ENCODE measurements at regions of chr13 and their contacts with region 1.

Region 1: GRCh38 chr13:29850224-29850898 is at the start of gene UBL3:
- DNase-seq: peak; percentile 89 to 97 (median 93)
- ATAC-seq: peak; percentile 87
- H3K4me3 ChIP-seq: peak within 1 kb of the TSS; percentile 82
- H3K4me3 Mint-ChIP-seq: peak within 1 kb of the TSS; percentile 99
- H3K27ac ChIP-seq: peak within 1 kb of the TSS; percentile 92 to 93
- H3K27ac Mint-ChIP-seq: peak within 1 kb of the TSS; percentile 86
- H3K4me1 ChIP-seq: peaks cover 4% of the 10 kb centered on the region
- H3K4me1 Mint-ChIP-seq: peaks cover 20% of the 10 kb centered on the region
- H3K27me3 ChIP-seq: no peaks in the 10 kb centered on the region
- H3K27me3 Mint-ChIP-seq: no peaks in the 10 kb centered on the region
- CTCF ChIP-seq: no peak
- total RNA-seq, gene UBL3: 39.5 to 41.9 TPM

Region 2: GRCh38 chr13:29595380-29596063 is 254.8 kb before region 1 on chr13 and contains the start of gene SLC7A1:
- CTCF ChIA-PET with region 1: no interaction called
- POLR2A ChIA-PET with region 1: interaction called, 3 read pairs
- intact Hi-C with region 1: loop called in 1 of 2 experiments (anchors 5 kb)
- DNase-seq: peak; percentile 54 to 95 (median 74)
- ATAC-seq: peak; percentile 90
- H3K4me3 ChIP-seq: peak within 1 kb of the TSS; percentile 65
- H3K4me3 Mint-ChIP-seq: peak within 1 kb of the TSS; percentile 97
- H3K27ac ChIP-seq: peak within 1 kb of the TSS; percentile 31 to 52
- H3K27ac Mint-ChIP-seq: peak within 1 kb of the TSS; percentile 93
- H3K4me1 ChIP-seq: peaks cover 23% of the 10 kb centered on the region
- H3K4me1 Mint-ChIP-seq: peaks cover 45% of the 10 kb centered on the region
- H3K27me3 ChIP-seq: no peaks in the 10 kb centered on the region
- H3K27me3 Mint-ChIP-seq: no peaks in the 10 kb centered on the region
- CTCF ChIP-seq: no peak
- total RNA-seq, gene SLC7A1: 11.3 to 12.3 TPM

Region 3: DNA sequence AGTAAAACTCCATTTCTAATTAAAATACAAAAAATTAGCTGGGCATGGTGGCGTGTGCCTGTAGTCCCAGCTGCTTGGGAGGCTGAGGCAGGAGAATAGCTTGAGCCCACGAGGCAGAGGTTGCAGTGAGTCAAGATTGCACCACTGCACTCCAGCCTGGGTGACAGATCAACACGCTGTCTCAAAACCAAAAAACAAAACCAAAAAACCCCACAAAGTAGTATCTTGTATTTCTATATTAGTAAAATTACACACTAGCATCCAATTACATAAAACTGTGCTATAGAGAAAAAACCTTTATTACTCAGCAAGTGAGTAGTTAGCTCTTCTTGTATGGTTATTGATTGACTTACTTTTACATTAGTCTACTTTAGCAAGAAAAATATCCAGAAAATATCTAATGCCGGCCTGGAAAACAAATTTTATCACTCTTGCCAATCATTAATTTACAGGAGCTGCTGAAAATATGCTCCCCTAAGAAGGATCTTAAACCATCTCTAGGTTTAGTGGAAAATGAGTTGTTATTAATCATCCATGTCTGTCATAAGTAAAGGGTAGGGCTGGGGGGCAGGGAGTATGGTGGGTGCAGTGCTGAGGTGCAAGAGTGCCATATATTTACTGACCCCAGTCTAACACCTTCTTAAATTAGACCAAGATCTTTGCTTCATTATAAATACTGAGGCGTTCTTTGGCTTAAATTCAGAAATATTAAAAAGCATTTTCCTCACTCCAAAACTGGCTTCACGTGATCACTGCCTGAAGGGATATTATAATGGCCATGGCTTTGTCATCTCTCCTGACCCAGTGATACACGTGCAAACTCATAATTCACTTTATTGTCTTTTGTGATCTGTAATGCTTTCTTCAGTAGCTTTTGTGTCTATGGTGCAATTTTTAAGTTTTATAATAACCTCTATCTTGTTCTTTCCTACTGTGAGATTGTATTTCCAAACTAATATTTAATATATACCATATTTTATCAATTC is 44.1 kb before region 1 on chr13:
- CTCF ChIA-PET with region 1: no interaction called
- POLR2A ChIA-PET with region 1: no interaction called
- intact Hi-C with region 1: loop called in 1 of 2 experiments (anchors 5 kb)
- DNase-seq: no peak
- ATAC-seq: no peak
- H3K4me3 ChIP-seq: no peak overlapping the region
- H3K4me3 Mint-ChIP-seq: no peak overlapping the region
- H3K27ac ChIP-seq: no peak overlapping the region
- H3K27ac Mint-ChIP-seq: no peak overlapping the region
- H3K4me1 ChIP-seq: peaks cover 8% of the 10 kb centered on the region
- H3K4me1 Mint-ChIP-seq: peaks cover 51% of the 10 kb centered on the region
- H3K27me3 ChIP-seq: no peaks in the 10 kb centered on the region
- H3K27me3 Mint-ChIP-seq: no peaks in the 10 kb centered on the region
- CTCF ChIP-seq: no peak

Region 4: GRCh38 chr13:29954082-29955028 is 104.0 kb after region 1 on chr13:
- CTCF ChIA-PET with region 1: interaction called, 3 read pairs
- POLR2A ChIA-PET with region 1: interaction called, 26 read pairs
- intact Hi-C with region 1: no loop called
- DNase-seq: peak in 13 of 14 experiments; percentile 16 to 72 (median 44)
- ATAC-seq: peak; percentile 76
- H3K4me3 ChIP-seq: peak overlapping the region; percentile 51
- H3K4me3 Mint-ChIP-seq: peak overlapping the region; percentile 90
- H3K27ac ChIP-seq: peak overlapping the region in 1 of 2 donors; percentile 61
- H3K27ac Mint-ChIP-seq: peak overlapping the region; percentile 88
- H3K4me1 ChIP-seq: peaks cover 34% of the 10 kb centered on the region
- H3K4me1 Mint-ChIP-seq: peaks cover 65% of the 10 kb centered on the region
- H3K27me3 ChIP-seq: no peaks in the 10 kb centered on the region
- H3K27me3 Mint-ChIP-seq: no peaks in the 10 kb centered on the region
- CTCF ChIP-seq: no peak

Region 5: GRCh38 chr13:30306762-30307193 is 456.4 kb after region 1 on chr13:
- CTCF ChIA-PET with region 1: no interaction called
- POLR2A ChIA-PET with region 1: no interaction called
- intact Hi-C with region 1: loop called in 1 of 2 experiments (anchors 10 kb)
- DNase-seq: peak; percentile 81 to 94 (median 88)
- ATAC-seq: peak; percentile 85
- H3K4me3 ChIP-seq: peak overlapping the region; percentile 86
- H3K4me3 Mint-ChIP-seq: peak overlapping the region; percentile 92
- H3K27ac ChIP-seq: peak overlapping the region; percentile 41 to 47
- H3K27ac Mint-ChIP-seq: peak overlapping the region; percentile 68
- H3K4me1 ChIP-seq: peaks cover 12% of the 10 kb centered on the region
- H3K4me1 Mint-ChIP-seq: peaks cover 12% of the 10 kb centered on the region
- H3K27me3 ChIP-seq: no peaks in the 10 kb centered on the region
- H3K27me3 Mint-ChIP-seq: no peaks in the 10 kb centered on the region
- CTCF ChIP-seq: no peak